Colonic mucosa (tissue), 4 donors: ENCODE measurements at regions of chr7 and their contacts with region 1.

Region 1: DNA sequence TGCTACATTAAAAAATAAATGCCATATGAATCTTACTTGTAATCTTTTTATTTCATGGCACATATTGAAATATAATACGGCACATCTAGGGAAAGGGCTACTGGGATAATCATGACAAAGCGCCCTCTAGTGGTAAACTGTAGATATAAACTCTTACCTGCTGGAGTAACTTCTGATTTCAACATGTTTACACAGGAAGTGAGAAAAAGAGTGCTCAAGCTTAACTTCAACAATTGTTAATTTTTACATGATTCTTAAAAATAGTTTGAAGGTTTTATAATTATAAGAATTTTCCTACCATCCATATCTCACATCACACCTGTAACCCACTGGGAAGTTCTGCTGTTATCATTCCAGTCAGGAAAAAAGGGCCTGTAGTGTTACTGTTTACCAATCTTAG is 2.0 kb upstream of the HEPACAM2 start:
- DNase-seq: peak; percentile 29
- H3K4me3 ChIP-seq: no peak overlapping the region
- H3K27ac ChIP-seq: no peak overlapping the region
- H3K4me1 ChIP-seq: peaks cover 6% of the 10 kb centered on the region
- H3K27me3 ChIP-seq: no peaks in the 10 kb centered on the region
- CTCF ChIP-seq: peak; percentile 78

Region 2: GRCh38 chr7:92192326-92192725 is 1036.0 kb before region 1 on chr7:
- intact Hi-C with region 1: no loop called
- DNase-seq: no peak
- H3K4me3 ChIP-seq: no peak overlapping the region
- H3K27ac ChIP-seq: no peak overlapping the region
- H3K4me1 ChIP-seq: no peaks in the 10 kb centered on the region
- H3K27me3 ChIP-seq: no peaks in the 10 kb centered on the region
- CTCF ChIP-seq: no peak

Region 3: DNA sequence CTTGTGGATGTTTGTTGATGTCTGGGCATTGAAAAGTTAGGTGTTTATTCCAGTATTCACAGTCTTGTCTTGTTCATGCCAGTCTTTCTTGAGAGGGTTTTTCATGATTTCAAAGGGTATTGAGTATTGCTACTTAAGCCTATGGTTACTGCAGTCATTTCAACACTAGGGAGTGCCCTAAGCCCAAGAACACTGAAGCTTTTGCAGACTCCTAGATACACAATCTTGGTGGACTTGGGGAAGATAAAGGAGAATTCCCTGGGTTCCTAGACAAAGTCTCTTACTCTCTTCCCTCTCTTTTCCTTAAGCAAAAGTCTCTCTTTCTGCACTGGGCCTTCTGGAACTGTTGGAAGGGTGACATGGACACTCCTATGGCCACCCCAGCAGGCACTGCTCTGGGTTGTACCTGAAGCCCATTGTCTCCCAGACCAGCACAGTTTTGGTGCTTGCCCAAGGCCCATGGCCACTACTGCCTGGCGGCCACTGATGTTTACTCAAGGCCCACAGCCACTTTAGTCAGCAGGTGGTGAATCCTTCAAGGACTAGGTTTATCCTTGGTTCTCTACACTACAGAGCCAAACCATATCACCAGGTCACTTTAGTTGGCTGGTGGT is 135.4 kb before region 1 on chr7:
- intact Hi-C with region 1: loop called (anchors 10 kb)
- DNase-seq: no peak
- H3K4me3 ChIP-seq: no peak overlapping the region
- H3K27ac ChIP-seq: no peak overlapping the region
- H3K4me1 ChIP-seq: no peaks in the 10 kb centered on the region
- H3K27me3 ChIP-seq: peaks cover 4% of the 10 kb centered on the region
- CTCF ChIP-seq: peak; percentile 17

Region 4: GRCh38 chr7:93178212-93178611 is 50.1 kb before region 1 on chr7:
- intact Hi-C with region 1: loop called (anchors 5 kb)
- DNase-seq: no peak
- H3K4me3 ChIP-seq: no peak overlapping the region
- H3K27ac ChIP-seq: no peak overlapping the region
- H3K4me1 ChIP-seq: no peaks in the 10 kb centered on the region
- H3K27me3 ChIP-seq: no peaks in the 10 kb centered on the region
- CTCF ChIP-seq: no peak

Region 5: GRCh38 chr7:93935112-93935511 is 706.8 kb after region 1 on chr7:
- intact Hi-C with region 1: no loop called
- DNase-seq: no peak
- H3K4me3 ChIP-seq: no peak overlapping the region
- H3K27ac ChIP-seq: no peak overlapping the region
- H3K4me1 ChIP-seq: no peaks in the 10 kb centered on the region
- H3K27me3 ChIP-seq: no peaks in the 10 kb centered on the region
- CTCF ChIP-seq: no peak